ENCODE measurements at regions of chr15 and their contacts with region 1.

Region 1: GRCh38 chr15:49242820-49243219 is 72.8 kb downstream of the GALK2 start:
- DNase-seq: no peak
- H3K4me3 ChIP-seq: no peak overlapping the region
- H3K27ac ChIP-seq: no peak overlapping the region
- H3K4me1 ChIP-seq: peaks cover 3 to 27% (median 16%) of the 10 kb centered on the region in 4 donors
- H3K27me3 ChIP-seq: no peaks in the 10 kb centered on the region
- CTCF ChIP-seq: no peak
- EP300 ChIP-seq: no peak
- POLR2A ChIP-seq: no peak

Region 2: GRCh38 chr15:49255966-49256759 is 13.3 kb after region 1 on chr15:
- in situ Hi-C with region 1: no loop called
- intact Hi-C with region 1: loop called (anchors 2 kb)
- DNase-seq: no peak
- H3K4me3 ChIP-seq: no peak overlapping the region
- H3K27ac ChIP-seq: no peak overlapping the region
- H3K4me1 ChIP-seq: peaks cover 0 to 5% (median 0%) of the 10 kb centered on the region in 4 donors
- H3K27me3 ChIP-seq: no peaks in the 10 kb centered on the region
- CTCF ChIP-seq: no peak
- EP300 ChIP-seq: no peak
- POLR2A ChIP-seq: no peak

Region 3: DNA sequence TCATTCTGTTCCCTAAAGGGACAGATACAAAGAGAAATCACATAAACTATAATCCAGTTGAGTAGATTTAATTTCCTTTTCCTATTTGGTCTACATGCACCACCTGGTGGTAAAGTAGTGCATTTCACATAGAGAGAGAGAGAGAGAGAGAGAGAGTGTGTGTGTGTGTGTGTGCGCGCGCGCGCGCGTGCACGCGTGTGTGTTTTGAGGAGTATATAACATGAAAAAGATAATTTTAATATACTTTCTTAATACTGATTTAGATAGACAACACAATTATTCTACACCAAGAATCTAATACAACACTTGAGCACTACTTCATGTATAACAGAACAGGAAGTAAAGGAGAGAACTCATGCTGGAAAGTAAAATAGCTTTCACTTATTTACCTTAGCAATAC is 179.2 kb after region 1 on chr15:
- in situ Hi-C with region 1: loop called (anchors 10 to 25 kb)
- intact Hi-C with region 1: loop called (anchors 5 kb)
- DNase-seq: peak; percentile 24
- H3K4me3 ChIP-seq: peak overlapping the region in 2 of 4 donors; percentile 3 to 43
- H3K27ac ChIP-seq: peak overlapping the region; percentile 71 to 80 (median 72)
- H3K4me1 ChIP-seq: peaks cover 0 to 2% (median 0%) of the 10 kb centered on the region in 4 donors
- H3K27me3 ChIP-seq: no peaks in the 10 kb centered on the region
- CTCF ChIP-seq: peak; percentile 73 to 96 (median 85)
- EP300 ChIP-seq: no peak
- POLR2A ChIP-seq: no peak